ENCODE measurements at regions of chr10 and their contacts with region 1.

Region 1: DNA sequence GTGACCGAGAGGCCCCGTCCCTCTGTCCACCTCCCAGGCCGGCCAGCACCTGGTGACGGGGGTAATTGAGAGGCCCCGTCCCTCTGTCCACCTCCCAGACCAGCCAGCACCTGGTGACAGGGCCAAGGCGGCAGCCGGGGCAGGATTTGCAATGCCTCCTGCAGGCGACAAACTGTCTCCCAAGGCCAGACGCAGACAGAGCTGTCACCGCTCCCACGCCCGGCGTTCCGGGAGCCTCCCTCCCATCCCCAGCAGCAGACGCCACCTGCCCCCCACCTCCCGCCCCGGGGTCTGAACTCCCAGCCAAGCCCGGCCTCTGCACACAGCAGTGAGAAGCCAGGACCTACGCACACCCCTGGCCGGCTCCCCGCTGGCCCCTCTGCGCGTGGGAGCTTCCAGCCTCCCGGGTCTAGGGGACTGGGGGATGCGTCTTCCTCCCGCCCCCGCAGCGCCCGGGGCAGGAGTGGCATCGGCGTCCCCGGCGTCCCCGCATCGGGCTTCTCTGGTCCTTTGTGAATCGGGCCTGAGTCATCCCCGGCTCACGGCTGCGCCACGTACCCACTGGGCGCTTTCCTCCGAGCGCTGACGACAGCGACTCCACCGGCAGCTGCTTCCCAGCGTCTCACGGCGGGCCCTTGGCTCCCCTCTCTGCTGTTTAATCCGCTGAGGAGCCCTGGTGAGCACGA is 95.1 kb upstream of the DIP2C start:
- DNase-seq: peak; percentile 82 to 88
- ATAC-seq: peak; percentile 82 to 93 (median 87)
- H3K4me3 ChIP-seq: peak overlapping the region; percentile 58
- H3K27ac ChIP-seq: no peak overlapping the region
- H3K4me1 ChIP-seq: peaks cover 13% of the 10 kb centered on the region
- H3K27me3 ChIP-seq: peaks cover 0 to 11% (median 0%) of the 10 kb centered on the region in 3 donors
- CTCF ChIP-seq: no peak

Region 2: DNA sequence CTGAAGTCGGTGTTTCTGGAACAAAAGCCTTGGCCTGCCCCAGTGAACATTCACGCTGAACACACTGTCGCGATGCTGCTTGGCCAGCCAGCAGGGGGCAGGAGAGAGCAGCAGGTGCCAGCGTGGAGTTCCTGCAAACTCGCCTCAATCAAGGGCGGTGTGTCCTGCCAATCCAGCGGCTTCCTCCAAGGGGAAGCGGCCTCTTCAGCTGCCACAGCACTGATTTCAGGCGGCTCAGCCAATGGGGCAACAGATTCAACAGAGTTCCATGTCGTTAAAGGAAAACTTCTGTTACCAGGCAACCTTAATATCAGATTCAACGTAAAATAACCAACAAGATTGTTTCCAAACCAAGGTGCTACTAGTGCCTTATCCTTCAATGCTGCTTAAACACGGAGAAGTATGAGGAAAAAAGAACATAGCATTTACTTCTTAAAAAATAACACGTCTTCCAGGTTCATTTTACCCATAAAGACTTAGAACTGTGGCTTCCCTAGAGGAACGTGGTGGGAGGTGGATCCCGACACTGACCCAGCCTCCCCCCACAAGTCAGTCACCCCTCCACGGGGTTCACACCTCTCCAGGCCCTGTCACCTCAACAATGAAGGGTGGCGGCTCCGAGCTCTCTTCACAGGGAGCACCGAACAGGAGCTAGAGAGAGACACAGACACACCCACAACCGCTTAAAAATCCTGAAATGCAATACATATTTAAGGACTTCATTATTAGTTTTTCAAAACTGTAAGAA is 273.3 kb before region 1 on chr10:
- intact Hi-C with region 1: loop called (anchors 2 to 5 kb)
- DNase-seq: peak; percentile 93 to 98
- ATAC-seq: peak; percentile 93 to 97 (median 96)
- H3K4me3 ChIP-seq: peak overlapping the region; percentile 40
- H3K27ac ChIP-seq: peak overlapping the region; percentile 77
- H3K4me1 ChIP-seq: peaks cover 39% of the 10 kb centered on the region
- H3K27me3 ChIP-seq: no peaks in the 10 kb centered on the region
- CTCF ChIP-seq: peak; percentile 97

Region 3: GRCh38 chr10:580778-581177 is 203.8 kb before region 1 on chr10:
- intact Hi-C with region 1: loop called (anchors 5 kb)
- DNase-seq: no peak
- ATAC-seq: peak; percentile 68 to 81 (median 72)
- H3K4me3 ChIP-seq: no peak overlapping the region
- H3K27ac ChIP-seq: no peak overlapping the region
- H3K4me1 ChIP-seq: peaks cover 30% of the 10 kb centered on the region
- H3K27me3 ChIP-seq: no peaks in the 10 kb centered on the region
- CTCF ChIP-seq: no peak

Region 4: GRCh38 chr10:588241-589165 is 196.0 kb before region 1 on chr10:
- intact Hi-C with region 1: loop called (anchors 5 kb)
- DNase-seq: peak; percentile 60 to 84
- ATAC-seq: peak; percentile 83 to 90 (median 88)
- H3K4me3 ChIP-seq: peak overlapping the region; percentile 5
- H3K27ac ChIP-seq: peak overlapping the region; percentile 21
- H3K4me1 ChIP-seq: peaks cover 47% of the 10 kb centered on the region
- H3K27me3 ChIP-seq: no peaks in the 10 kb centered on the region
- CTCF ChIP-seq: peak; percentile 43

Region 5: GRCh38 chr10:615583-616152 is 168.9 kb before region 1 on chr10:
- intact Hi-C with region 1: loop called in 1 of 2 experiments (anchors 10 kb)
- DNase-seq: no peak
- ATAC-seq: no peak
- H3K4me3 ChIP-seq: no peak overlapping the region
- H3K27ac ChIP-seq: no peak overlapping the region
- H3K4me1 ChIP-seq: peaks cover 72% of the 10 kb centered on the region
- H3K27me3 ChIP-seq: no peaks in the 10 kb centered on the region
- CTCF ChIP-seq: no peak

Region 6: GRCh38 chr10:689433-690371 is 94.8 kb before region 1 on chr10 and contains the start of gene DIP2C:
- intact Hi-C with region 1: loop called (anchors 5 kb)
- DNase-seq: peak; percentile 84 to 88
- ATAC-seq: peak; percentile 72 to 81 (median 79)
- H3K4me3 ChIP-seq: peak within 1 kb of the TSS; percentile 90
- H3K27ac ChIP-seq: peak within 1 kb of the TSS; percentile 84
- H3K4me1 ChIP-seq: peaks cover 6% of the 10 kb centered on the region
- H3K27me3 ChIP-seq: no peaks in the 10 kb centered on the region
- CTCF ChIP-seq: no peak
- total RNA-seq, gene DIP2C: 25.0 to 32.0 (median 30.4) TPM